Dendritic cell treated with granulocyte-macrophage colony-stimulating factor and Interleukin-4, amounts not matched to agents 40 ng/mL and 50 ng/mL, for 4 days (primary cell): ENCODE measurements at regions of chr20 and their contacts with region 1.

Region 1: DNA sequence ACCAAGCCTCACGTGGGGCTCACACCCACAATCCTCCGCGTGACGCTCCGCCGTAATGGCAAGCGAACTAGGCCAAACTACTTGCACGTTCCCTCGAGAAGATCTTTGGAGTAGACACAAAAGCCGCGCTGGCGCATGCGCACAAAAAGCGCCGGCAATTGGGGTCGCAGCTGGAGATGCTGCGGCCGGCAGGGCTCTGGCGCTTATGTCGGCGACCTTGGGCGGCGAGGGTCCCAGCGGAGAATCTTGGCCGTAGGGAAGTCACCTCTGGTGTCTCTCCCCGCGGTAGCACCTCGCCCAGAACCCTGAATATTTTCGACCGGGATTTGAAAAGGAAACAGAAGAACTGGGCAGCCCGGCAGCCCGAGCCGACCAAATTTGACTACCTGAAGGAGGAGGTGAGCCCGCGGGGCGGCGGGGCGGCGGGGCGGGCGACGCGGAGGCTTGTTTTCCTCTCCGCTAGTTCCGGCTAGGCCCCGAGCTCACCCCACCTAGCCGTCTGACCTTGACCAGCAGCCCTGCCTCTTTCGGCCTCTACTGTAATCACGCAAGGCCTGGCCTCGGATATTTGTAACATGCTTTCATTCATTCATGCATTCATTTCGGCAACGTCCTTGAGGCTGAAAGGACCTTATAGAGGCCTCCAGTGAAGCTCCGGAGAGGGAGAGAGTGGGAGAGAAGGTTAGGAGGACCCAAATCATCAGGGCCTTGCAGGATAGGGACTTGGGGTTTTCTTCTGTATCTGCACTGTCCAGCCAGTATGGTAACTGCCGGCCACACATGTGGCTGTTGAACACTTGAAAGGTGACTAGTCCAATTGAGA is at the starts of genes ESF1 and NDUFAF5:
- H3K4me3 Mint-ChIP-seq: peak within 1 kb of the TSS; percentile 90
- H3K27ac Mint-ChIP-seq: peak within 1 kb of the TSS; percentile 99
- H3K4me1 Mint-ChIP-seq: peaks cover 31% of the 10 kb centered on the region
- H3K27me3 Mint-ChIP-seq: no peaks in the 10 kb centered on the region

Region 2: GRCh38 chr20:13009682-13010406 is 775.3 kb before region 1 on chr20:
- intact Hi-C with region 1: loop called (anchors 5 kb)
- H3K4me3 Mint-ChIP-seq: no peak overlapping the region
- H3K27ac Mint-ChIP-seq: peak overlapping the region; percentile 72
- H3K4me1 Mint-ChIP-seq: peaks cover 25% of the 10 kb centered on the region
- H3K27me3 Mint-ChIP-seq: peaks cover 12% of the 10 kb centered on the region

Region 3: GRCh38 chr20:13638496-13639222 is 146.4 kb before region 1 on chr20 and contains the start of gene TASP1:
- intact Hi-C with region 1: loop called (anchors 2 kb)
- H3K4me3 Mint-ChIP-seq: peak within 1 kb of the TSS; percentile 96
- H3K27ac Mint-ChIP-seq: peak within 1 kb of the TSS; percentile 84
- H3K4me1 Mint-ChIP-seq: peaks cover 6% of the 10 kb centered on the region
- H3K27me3 Mint-ChIP-seq: peaks cover 15% of the 10 kb centered on the region

Region 4: GRCh38 chr20:13909067-13909466 is 124.0 kb after region 1 on chr20:
- intact Hi-C with region 1: no loop called
- H3K4me3 Mint-ChIP-seq: no peak overlapping the region
- H3K27ac Mint-ChIP-seq: no peak overlapping the region
- H3K4me1 Mint-ChIP-seq: no peaks in the 10 kb centered on the region
- H3K27me3 Mint-ChIP-seq: peaks cover 1% of the 10 kb centered on the region

Region 5: GRCh38 chr20:15708984-15709598 is 1924.0 kb after region 1 on chr20:
- intact Hi-C with region 1: no loop called
- H3K4me3 Mint-ChIP-seq: no peak overlapping the region
- H3K27ac Mint-ChIP-seq: no peak overlapping the region
- H3K4me1 Mint-ChIP-seq: no peaks in the 10 kb centered on the region
- H3K27me3 Mint-ChIP-seq: no peaks in the 10 kb centered on the region